Right ventricle myocardium inferior (tissue), 1 donor: ENCODE measurements at regions of chr5 and their contacts with region 1.

Region 1: GRCh38 chr5:154857530-154858296 is 714 bp upstream of the CNOT8 start:
- DNase-seq: peak; percentile 99
- ATAC-seq: peak; percentile 84

Region 2: DNA sequence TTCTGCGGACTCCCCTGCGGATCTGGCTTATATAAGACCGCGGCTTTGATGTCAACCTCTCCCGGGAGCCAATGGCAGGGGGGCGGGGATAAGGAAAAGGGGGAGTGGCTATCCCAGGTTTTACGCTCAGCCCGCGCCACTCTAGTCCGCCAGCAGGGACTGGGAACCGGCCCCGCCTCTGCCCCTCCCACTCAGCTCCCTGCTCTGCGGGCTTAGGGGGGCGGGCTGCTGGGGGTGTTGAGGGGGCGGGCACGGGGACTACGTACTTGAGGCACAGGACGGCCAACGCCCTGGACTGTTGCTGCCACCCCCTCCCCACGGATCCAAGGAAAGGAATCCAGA is 379.5 kb before region 1 on chr5 and contains the start of gene HAND1:
- intact Hi-C with region 1: loop called (anchors 10 kb)
- DNase-seq: peak; percentile 76
- ATAC-seq: peak; percentile 89
- total RNA-seq, gene HAND1: 29.8 TPM

Region 3: GRCh38 chr5:154654486-154655371 is 203.0 kb before region 1 on chr5:
- intact Hi-C with region 1: loop called (anchors 5 kb)
- DNase-seq: no peak
- ATAC-seq: no peak

Region 4: DNA sequence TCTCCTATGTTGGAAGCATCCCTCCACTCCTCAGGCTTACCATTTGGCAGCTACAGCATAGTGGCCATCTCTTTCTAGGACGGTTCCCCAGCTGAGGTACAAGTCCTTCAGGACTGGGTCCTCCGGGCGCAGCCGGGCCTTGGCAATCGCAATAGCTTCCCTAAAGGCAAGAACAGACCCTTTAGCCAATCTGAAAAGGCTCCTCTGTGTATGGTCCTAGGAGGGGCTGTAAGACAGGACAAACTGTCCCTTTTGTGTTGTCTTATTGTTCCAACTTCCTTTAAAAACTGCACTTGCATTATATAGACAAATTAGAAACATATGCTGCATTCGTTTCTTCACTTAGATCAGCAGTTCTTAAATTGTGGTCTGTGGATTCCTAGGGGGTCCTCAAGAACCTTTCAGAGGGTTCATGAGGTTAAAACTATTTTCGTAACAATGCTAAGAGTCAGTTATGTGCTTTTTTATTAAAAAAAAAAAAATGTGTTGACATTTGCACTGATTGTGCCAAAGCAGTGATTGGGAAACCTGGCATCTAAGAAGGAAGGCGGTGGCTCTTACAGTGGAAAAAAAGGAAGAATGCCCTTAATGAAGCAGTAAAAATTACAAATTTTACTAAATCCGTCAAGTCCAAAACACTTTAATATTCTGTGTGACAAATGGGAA is 41.6 kb after region 1 on chr5:
- intact Hi-C with region 1: loop called (anchors 5 kb)
- DNase-seq: no peak
- ATAC-seq: no peak

Region 5: GRCh38 chr5:154937718-154938466 is 80.2 kb after region 1 on chr5 and contains the start of gene GEMIN5:
- intact Hi-C with region 1: loop called (anchors 5 kb)
- DNase-seq: peak; percentile 92
- ATAC-seq: peak; percentile 96
- total RNA-seq, gene GEMIN5: 13.0 TPM